Caco-2 (cell line): ENCODE measurements at regions of chr14 and their contacts with region 1.

Region 1: DNA sequence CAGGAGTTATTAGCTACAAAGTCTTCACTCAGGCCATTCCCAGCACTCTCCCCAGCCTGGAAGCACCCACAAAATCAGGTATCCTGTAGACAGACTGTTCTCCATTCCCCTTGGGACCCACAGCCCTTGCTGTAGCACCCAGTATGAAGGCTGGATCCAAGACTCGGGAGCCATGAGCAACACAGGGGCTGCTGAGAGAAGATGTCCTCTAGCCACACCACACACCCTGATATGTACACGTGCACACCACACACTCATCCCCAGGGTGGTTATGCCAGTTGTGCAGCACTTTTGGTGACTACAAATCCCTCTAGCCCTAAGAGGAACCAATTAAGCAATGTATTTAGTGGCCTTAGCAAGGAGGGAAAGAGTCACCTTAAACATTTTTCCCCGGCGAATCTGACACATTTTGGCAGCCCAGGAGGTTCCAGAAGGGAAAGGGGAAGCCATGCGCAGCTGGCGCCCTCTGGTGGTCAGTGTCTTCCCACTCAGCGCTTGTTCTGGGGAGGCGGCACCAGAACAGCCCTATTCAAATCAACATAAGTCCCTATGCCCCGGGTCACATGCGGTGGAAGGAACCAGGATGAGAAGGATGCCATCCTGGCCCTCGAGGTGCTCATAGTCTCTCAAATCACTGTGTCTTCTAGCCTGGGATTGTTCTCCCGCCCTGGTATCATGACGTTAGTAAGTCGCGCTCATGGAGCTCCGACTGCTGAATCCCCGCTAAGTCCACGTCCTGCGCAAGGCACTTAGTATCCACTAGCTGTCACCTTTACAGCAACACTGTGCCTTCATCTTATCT is 96.9 kb downstream of the GCH1 start:
- DNase-seq: peak; percentile 75 to 85
- H3K4me3 ChIP-seq: no peak overlapping the region
- H3K4me3 Mint-ChIP-seq: no peak overlapping the region
- H3K27ac Mint-ChIP-seq: no peak overlapping the region
- H3K4me1 ChIP-seq: 0 out of 2 replicates have a peak, but pooled peaks cover 3% of the 10 kb centered on the region
- H3K4me1 Mint-ChIP-seq: no peaks in the 10 kb centered on the region
- H3K27me3 ChIP-seq: peaks cover 1% of the 10 kb centered on the region; the same call in 1 of the 2 replicates
- H3K27me3 Mint-ChIP-seq: no peaks in the 10 kb centered on the region
- CTCF ChIP-seq: peak; percentile 87 to 96

Region 2: DNA sequence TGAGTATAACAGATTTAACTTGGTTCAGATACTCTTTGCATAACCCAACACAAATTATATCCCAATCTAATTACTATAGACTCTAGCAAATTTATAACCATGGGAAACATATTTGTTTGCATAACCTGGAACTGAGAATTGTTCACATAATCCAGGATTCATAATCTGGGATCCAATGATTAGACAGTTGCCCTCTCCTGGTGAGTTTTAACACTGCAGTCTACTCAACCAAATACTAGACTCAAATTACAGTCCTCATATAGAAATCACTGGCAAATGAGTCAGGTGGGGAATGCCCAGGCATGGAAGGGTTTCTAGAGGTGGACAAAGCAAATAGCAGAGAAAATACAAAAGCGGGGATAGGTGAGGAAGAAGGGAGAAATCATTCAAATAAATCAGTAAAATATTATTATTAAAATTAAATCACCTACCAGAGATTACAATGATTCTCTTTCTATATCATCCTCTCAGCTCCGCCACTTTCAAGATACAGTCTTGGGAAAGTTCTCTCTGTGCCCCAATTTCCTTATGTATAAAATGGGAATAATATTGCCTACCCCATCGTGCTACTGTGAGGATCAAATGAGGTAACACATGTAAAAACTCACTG is 87.5 kb after region 1 on chr14:
- CTCF ChIA-PET with region 1: no interaction called
- POLR2A ChIA-PET with region 1: no interaction called
- intact Hi-C with region 1: loop called (anchors 2 kb)
- DNase-seq: peak in 1 of 2 experiments; percentile 49
- H3K4me3 ChIP-seq: no peak overlapping the region
- H3K4me3 Mint-ChIP-seq: no peak overlapping the region
- H3K27ac Mint-ChIP-seq: no peak overlapping the region
- H3K4me1 ChIP-seq: no peaks in the 10 kb centered on the region
- H3K4me1 Mint-ChIP-seq: peaks cover 20% of the 10 kb centered on the region
- H3K27me3 ChIP-seq: no peaks in the 10 kb centered on the region
- H3K27me3 Mint-ChIP-seq: no peaks in the 10 kb centered on the region
- CTCF ChIP-seq: peak; percentile 51 to 63